Gastrocnemius medialis (tissue), 4 donors: ENCODE measurements at regions of chrX and their contacts with region 1.

Region 1: DNA sequence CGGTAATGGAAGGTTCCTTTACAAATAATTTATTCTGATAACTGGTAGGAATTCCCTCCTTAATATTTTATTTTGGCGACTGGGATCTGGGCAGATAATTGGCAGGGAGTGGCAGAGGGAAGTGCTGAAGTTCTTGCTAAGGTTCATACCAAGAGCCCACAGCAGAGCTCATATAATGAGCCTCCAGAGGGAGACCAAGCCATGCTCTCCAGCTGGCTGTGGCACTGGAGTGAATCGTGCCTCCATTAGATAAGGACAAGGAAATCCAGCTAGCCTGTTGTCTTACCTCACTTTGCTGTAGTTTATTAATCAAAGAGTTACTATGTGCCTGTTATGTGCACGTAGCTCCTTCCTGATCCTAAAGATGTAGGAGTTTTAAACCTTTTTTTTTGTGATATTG is 1.3 kb downstream of the ASB12 start:
- DNase-seq: peak in 1 of 2 donors; percentile 22
- ATAC-seq: peak; percentile 28 to 68
- H3K4me3 ChIP-seq: peak overlapping the region in 2 of 4 donors; percentile 50 to 60
- H3K27ac ChIP-seq: peak overlapping the region; percentile 83 to 89 (median 84)
- H3K4me1 ChIP-seq: peaks cover 0 to 3% of the 10 kb centered on the region in 2 donors
- H3K27me3 ChIP-seq: no peaks in the 10 kb centered on the region
- CTCF ChIP-seq: no peak
- POLR2A ChIP-seq: no peak

Region 2: DNA sequence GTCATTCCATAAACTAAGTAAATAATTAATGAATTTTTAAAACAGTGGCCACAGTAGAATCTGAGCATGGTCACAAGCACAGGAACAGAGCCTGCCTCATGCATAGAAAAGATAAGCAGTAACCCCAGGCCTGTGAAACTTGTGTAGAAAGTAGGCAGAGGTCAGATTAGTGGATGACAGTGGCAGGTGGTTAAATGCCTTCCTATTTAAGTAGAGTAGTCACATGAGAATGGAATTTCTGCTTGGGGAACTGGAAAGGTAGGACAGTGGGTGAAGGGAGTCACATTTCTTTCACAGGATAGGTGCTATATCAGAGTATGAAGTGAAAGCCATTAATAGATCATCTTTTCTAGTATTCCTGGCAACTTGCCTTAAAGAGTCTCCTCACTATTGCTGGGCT is 36.1 kb after region 1 on chrX:
- in situ Hi-C with region 1: no loop called
- intact Hi-C with region 1: loop called (anchors 1 kb)
- DNase-seq: no peak
- ATAC-seq: peak in 1 of 2 donors; percentile 92
- H3K4me3 ChIP-seq: no peak overlapping the region
- H3K27ac ChIP-seq: peak overlapping the region in 2 of 4 donors; percentile 4 to 43
- H3K4me1 ChIP-seq: peaks cover 0 to 7% of the 10 kb centered on the region in 2 donors
- H3K27me3 ChIP-seq: no peaks in the 10 kb centered on the region
- CTCF ChIP-seq: no peak
- POLR2A ChIP-seq: no peak

Region 3: DNA sequence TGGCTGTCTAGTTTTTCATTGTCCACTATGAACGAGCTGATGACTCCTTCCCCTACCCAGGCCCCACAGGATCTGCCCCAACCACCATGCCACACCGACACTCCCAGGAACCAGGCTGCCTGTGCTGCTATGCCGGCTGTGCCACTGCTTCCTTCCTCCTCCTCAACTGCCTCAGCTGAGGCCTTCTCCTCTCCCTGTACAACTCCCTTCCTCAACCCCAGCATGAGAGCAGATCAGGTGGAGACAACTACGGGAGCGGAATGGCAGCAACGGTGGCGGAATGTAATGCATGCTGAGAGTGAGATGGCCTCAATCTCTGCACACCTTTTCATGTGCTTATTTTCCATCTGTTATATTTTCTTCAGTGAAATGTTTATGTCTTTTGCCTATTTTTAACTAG is 77.6 kb after region 1 on chrX:
- in situ Hi-C with region 1: no loop called
- intact Hi-C with region 1: no loop called
- DNase-seq: no peak
- ATAC-seq: no peak
- H3K4me3 ChIP-seq: no peak overlapping the region
- H3K27ac ChIP-seq: no peak overlapping the region
- H3K4me1 ChIP-seq: no peaks in the 10 kb centered on the region
- H3K27me3 ChIP-seq: no peaks in the 10 kb centered on the region
- CTCF ChIP-seq: no peak
- POLR2A ChIP-seq: no peak

Region 4: GRCh38 chrX:64338296-64338695 is 109.2 kb after region 1 on chrX:
- in situ Hi-C with region 1: loop called in 1 of 4 experiments (anchors 25 kb)
- intact Hi-C with region 1: no loop called
- DNase-seq: no peak
- ATAC-seq: no peak
- H3K4me3 ChIP-seq: no peak overlapping the region
- H3K27ac ChIP-seq: no peak overlapping the region
- H3K4me1 ChIP-seq: no peaks in the 10 kb centered on the region
- H3K27me3 ChIP-seq: no peaks in the 10 kb centered on the region
- CTCF ChIP-seq: no peak
- POLR2A ChIP-seq: no peak